CD4-positive, alpha-beta T cell (primary cell): ENCODE measurements at regions of chr1 and their contacts with region 1.

Region 1: GRCh38 chr1:153572569-153573015 is 6.9 kb upstream of the S100A2 start:
- DNase-seq: peak in 12 of 14 experiments; percentile 23 to 70 (median 46)
- ATAC-seq: peak; percentile 72
- H3K4me3 ChIP-seq: no peak overlapping the region
- H3K4me3 Mint-ChIP-seq: no peak overlapping the region
- H3K27ac ChIP-seq: no peak overlapping the region
- H3K27ac Mint-ChIP-seq: no peak overlapping the region
- H3K4me1 ChIP-seq: peaks cover 17% of the 10 kb centered on the region
- H3K4me1 Mint-ChIP-seq: peaks cover 20% of the 10 kb centered on the region
- H3K27me3 ChIP-seq: peaks cover 0 to 2% of the 10 kb centered on the region in 2 experiments
- H3K27me3 Mint-ChIP-seq: peaks cover 9% of the 10 kb centered on the region
- CTCF ChIP-seq: no peak

Region 2: DNA sequence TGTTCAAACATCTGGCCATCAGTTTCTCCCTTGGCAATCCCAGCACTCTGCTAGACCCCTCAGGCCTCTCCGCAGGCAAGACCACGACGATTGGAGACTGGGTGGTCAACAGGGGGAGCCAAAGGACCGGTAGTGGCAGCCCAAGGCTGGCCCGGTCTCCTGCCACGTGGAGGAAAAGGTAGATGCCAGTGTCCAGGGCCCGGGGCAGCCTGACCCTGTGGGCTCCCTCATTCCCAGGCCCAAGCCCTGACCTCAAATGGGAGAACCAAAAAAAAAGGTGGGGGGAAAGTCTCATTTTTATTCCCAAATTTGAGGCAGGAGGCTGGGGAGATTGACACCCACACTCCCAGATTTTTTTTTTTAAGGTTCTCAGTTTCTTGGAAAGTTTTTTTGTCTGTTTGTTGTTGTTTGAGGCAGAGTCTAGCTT is 61.6 kb before region 1 on chr1:
- CTCF ChIA-PET with region 1: interaction called, 36 read pairs
- POLR2A ChIA-PET with region 1: interaction called, 6 read pairs
- intact Hi-C with region 1: loop called (anchors 1 kb)
- DNase-seq: peak; percentile 64 to 91 (median 75)
- ATAC-seq: peak; percentile 79
- H3K4me3 ChIP-seq: no peak overlapping the region
- H3K4me3 Mint-ChIP-seq: no peak overlapping the region
- H3K27ac ChIP-seq: no peak overlapping the region
- H3K27ac Mint-ChIP-seq: no peak overlapping the region
- H3K4me1 ChIP-seq: peaks cover 17% of the 10 kb centered on the region
- H3K4me1 Mint-ChIP-seq: peaks cover 8% of the 10 kb centered on the region
- H3K27me3 ChIP-seq: no peaks in the 10 kb centered on the region
- H3K27me3 Mint-ChIP-seq: no peaks in the 10 kb centered on the region
- CTCF ChIP-seq: peak; percentile 98

Region 3: GRCh38 chr1:153545067-153546055 is 27.2 kb before region 1 on chr1 and contains the start of gene S100A4:
- CTCF ChIA-PET with region 1: interaction called, 15 read pairs
- POLR2A ChIA-PET with region 1: interaction called, 12 read pairs
- intact Hi-C with region 1: loop called in 1 of 2 experiments (anchors 2 kb)
- DNase-seq: peak; percentile 65 to 95 (median 88)
- ATAC-seq: peak; percentile 81
- H3K4me3 ChIP-seq: peak within 1 kb of the TSS; percentile 82
- H3K4me3 Mint-ChIP-seq: peak within 1 kb of the TSS; percentile 88
- H3K27ac ChIP-seq: peak within 1 kb of the TSS; percentile 83 to 85
- H3K27ac Mint-ChIP-seq: peak within 1 kb of the TSS; percentile 98
- H3K4me1 ChIP-seq: peaks cover 83% of the 10 kb centered on the region
- H3K4me1 Mint-ChIP-seq: peaks cover 72% of the 10 kb centered on the region
- H3K27me3 ChIP-seq: no peaks in the 10 kb centered on the region
- H3K27me3 Mint-ChIP-seq: no peaks in the 10 kb centered on the region
- CTCF ChIP-seq: no peak
- total RNA-seq, gene S100A4: 297 to 299 TPM

Region 4: DNA sequence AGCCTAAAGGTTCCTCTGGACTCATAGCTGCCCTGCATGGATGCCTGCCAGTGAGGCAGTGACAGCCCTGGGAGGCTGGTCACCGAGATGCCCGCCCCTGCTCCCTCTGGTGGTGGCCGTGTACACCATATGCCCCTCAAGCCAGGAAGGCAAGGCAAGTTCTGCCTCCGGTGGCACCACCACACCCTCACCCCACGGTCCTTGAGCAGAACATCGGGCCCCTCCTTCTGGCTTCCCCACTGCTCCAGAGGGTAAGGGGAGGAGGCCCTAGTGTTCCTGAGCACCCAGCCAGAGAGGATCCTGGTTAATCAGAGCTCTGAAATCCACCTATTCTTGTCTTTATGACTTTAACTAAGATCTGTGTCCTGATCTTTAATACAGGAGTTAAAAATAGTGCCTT is 45.1 kb after region 1 on chr1:
- CTCF ChIA-PET with region 1: no interaction called
- POLR2A ChIA-PET with region 1: no interaction called
- intact Hi-C with region 1: loop called in 1 of 2 experiments (anchors 5 kb)
- DNase-seq: peak in 12 of 14 experiments; percentile 38 to 86 (median 59)
- ATAC-seq: peak; percentile 86
- H3K4me3 ChIP-seq: no peak overlapping the region
- H3K4me3 Mint-ChIP-seq: no peak overlapping the region
- H3K27ac ChIP-seq: no peak overlapping the region
- H3K27ac Mint-ChIP-seq: no peak overlapping the region
- H3K4me1 ChIP-seq: peaks cover 7% of the 10 kb centered on the region
- H3K4me1 Mint-ChIP-seq: peaks cover 5% of the 10 kb centered on the region
- H3K27me3 ChIP-seq: no peaks in the 10 kb centered on the region
- H3K27me3 Mint-ChIP-seq: no peaks in the 10 kb centered on the region
- CTCF ChIP-seq: peak; percentile 60

Region 5: GRCh38 chr1:153749408-153750005 is 176.9 kb after region 1 on chr1:
- CTCF ChIA-PET with region 1: no interaction called
- POLR2A ChIA-PET with region 1: no interaction called
- intact Hi-C with region 1: loop called in 1 of 2 experiments (anchors 2 kb)
- DNase-seq: peak; percentile 67 to 87 (median 75)
- ATAC-seq: peak; percentile 100
- H3K4me3 ChIP-seq: no peak overlapping the region
- H3K4me3 Mint-ChIP-seq: no peak overlapping the region
- H3K27ac ChIP-seq: no peak overlapping the region
- H3K27ac Mint-ChIP-seq: peak overlapping the region; percentile 3
- H3K4me1 ChIP-seq: no peaks in the 10 kb centered on the region
- H3K4me1 Mint-ChIP-seq: peaks cover 6% of the 10 kb centered on the region
- H3K27me3 ChIP-seq: no peaks in the 10 kb centered on the region
- H3K27me3 Mint-ChIP-seq: no peaks in the 10 kb centered on the region
- CTCF ChIP-seq: peak; percentile 95